ENCODE measurements at regions of chr17 and their contacts with region 1.

Region 1: DNA sequence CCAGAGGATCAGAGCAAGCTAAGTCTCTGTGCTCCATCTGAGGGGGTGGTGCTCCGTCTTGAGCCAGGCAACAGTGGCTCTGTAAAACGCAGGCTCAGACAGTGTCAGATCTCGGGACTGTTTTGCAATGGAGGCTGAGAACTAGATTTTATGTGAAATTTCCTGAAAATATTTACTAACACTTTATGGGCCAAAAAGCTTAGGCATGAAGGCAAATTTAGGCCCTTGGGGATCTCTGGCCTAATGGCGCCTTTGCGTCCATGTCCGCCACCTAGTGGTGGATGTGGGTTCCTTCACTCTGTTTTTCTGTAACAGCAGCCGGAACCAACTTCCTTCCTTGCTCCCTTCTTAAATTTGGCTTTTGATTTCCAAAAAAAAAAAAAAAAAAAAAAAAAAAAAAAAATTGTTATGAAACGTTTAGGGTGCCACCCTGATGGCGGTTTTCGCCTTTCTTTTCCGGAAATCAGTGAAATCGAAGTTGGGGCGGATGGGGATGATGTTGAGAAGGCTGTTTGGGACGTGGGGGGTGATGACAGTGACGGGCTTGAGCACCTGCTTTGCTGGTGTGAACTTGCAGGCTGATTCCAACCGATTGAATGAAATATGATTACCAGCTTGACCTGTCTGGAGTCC is 14.0 kb upstream of the ELAC2 start:
- DNase-seq: peak in 1 of 2 experiments; percentile 13
- H3K4me3 ChIP-seq: no peak overlapping the region
- H3K4me3 Mint-ChIP-seq: no peak overlapping the region
- H3K27ac Mint-ChIP-seq: no peak overlapping the region
- H3K4me1 ChIP-seq: no peaks in the 10 kb centered on the region
- H3K4me1 Mint-ChIP-seq: no peaks in the 10 kb centered on the region
- H3K27me3 ChIP-seq: no peaks in the 10 kb centered on the region
- H3K27me3 Mint-ChIP-seq: no peaks in the 10 kb centered on the region
- CTCF ChIP-seq: peak; percentile 29 to 39

Region 2: GRCh38 chr17:12867726-12868125 is 164.1 kb before region 1 on chr17:
- CTCF ChIA-PET with region 1: no interaction called
- POLR2A ChIA-PET with region 1: no interaction called
- intact Hi-C with region 1: no loop called
- DNase-seq: no peak
- H3K4me3 ChIP-seq: no peak overlapping the region
- H3K4me3 Mint-ChIP-seq: no peak overlapping the region
- H3K27ac Mint-ChIP-seq: no peak overlapping the region
- H3K4me1 ChIP-seq: no peaks in the 10 kb centered on the region
- H3K4me1 Mint-ChIP-seq: no peaks in the 10 kb centered on the region
- H3K27me3 ChIP-seq: no peaks in the 10 kb centered on the region
- H3K27me3 Mint-ChIP-seq: no peaks in the 10 kb centered on the region
- CTCF ChIP-seq: no peak

Region 3: DNA sequence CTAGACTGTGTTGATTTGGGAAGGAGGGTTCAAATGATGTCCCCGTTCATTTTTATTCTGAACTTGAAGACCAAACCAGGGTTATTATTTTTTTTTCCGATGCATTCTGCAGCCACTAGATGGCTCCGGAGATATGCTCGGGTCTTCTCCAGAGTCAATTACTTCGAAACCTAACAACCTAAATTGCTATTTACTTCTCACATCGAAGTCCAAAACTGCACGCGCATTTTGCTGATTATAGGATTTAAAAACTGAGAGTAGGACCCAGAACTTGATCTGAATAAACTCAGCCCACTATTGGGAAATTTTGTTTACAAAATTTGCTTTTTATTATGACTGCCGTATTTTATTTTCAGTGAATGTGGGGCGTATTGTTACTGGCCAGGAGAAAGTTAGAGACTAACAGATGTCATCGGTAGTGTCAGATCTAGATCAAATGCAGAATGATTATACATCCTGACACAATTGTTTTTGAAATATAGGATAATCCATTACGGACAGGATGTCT is 306.1 kb after region 1 on chr17:
- CTCF ChIA-PET with region 1: no interaction called
- POLR2A ChIA-PET with region 1: no interaction called
- intact Hi-C with region 1: loop called (anchors 10 kb)
- DNase-seq: peak in 1 of 2 experiments; percentile 20
- H3K4me3 ChIP-seq: no peak overlapping the region
- H3K4me3 Mint-ChIP-seq: peak overlapping the region; percentile 29
- H3K27ac Mint-ChIP-seq: no peak overlapping the region
- H3K4me1 ChIP-seq: no peaks in the 10 kb centered on the region
- H3K4me1 Mint-ChIP-seq: no peaks in the 10 kb centered on the region
- H3K27me3 ChIP-seq: no peaks in the 10 kb centered on the region
- H3K27me3 Mint-ChIP-seq: no peaks in the 10 kb centered on the region
- CTCF ChIP-seq: peak; percentile 41 to 63

Region 4: DNA sequence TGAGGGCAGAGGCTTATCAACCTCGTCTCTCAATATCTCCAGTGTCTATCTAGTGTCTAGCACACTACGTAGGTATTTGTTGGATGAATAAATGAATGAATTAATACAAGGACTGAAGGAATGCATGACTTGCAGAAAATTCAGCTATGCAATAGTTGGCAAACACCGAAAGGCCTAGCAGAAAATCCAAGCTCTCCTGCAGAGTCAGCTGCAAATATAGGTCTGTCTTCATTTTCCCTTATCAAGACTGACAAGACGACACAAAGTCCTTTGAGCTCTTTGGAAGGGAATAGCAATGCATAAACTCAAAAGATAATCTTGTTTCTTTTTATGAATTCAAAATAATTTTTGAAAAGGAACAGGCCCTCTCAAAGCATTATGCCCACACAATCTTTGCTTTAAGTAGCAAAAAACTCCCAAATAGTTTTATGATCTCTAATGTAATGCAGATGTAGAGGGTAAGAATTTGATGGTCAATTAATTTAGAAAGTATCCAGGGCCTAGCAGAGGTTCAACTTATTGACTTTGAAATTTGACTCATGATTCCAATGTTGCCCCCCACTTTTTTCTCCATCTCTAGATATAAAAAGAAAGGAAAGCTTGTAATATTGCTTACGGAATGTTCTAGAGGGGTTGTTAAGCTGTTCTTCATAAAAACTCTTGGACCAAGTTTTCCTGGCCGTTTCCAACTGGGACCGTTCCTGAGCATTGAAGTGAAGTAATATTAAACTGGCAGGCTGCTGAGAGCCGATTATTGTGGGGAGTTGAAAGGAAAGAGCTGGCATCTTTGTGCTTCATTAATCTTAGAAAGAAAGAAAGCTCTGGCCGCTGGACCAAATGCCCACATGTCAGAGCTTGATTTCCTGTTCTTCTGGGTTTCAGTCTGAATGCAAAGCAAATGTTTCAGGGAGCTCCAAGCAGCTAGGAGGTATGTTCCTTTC is 342.6 kb after region 1 on chr17:
- CTCF ChIA-PET with region 1: no interaction called
- POLR2A ChIA-PET with region 1: no interaction called
- intact Hi-C with region 1: no loop called
- DNase-seq: no peak
- H3K4me3 ChIP-seq: no peak overlapping the region
- H3K4me3 Mint-ChIP-seq: no peak overlapping the region
- H3K27ac Mint-ChIP-seq: no peak overlapping the region
- H3K4me1 ChIP-seq: no peaks in the 10 kb centered on the region
- H3K4me1 Mint-ChIP-seq: no peaks in the 10 kb centered on the region
- H3K27me3 ChIP-seq: no peaks in the 10 kb centered on the region
- H3K27me3 Mint-ChIP-seq: no peaks in the 10 kb centered on the region
- CTCF ChIP-seq: no peak